Transverse colon (tissue), 4 donors: ENCODE measurements at regions of chr16 and their contacts with region 1.

Region 1: GRCh38 chr16:8674413-8675022 is at the start of gene ABAT:
- DNase-seq: peak; percentile 94
- H3K4me3 ChIP-seq: peak within 1 kb of the TSS; percentile 49 to 91 (median 60)
- H3K27ac ChIP-seq: peak within 1 kb of the TSS; percentile 51 to 67 (median 58)
- H3K4me1 ChIP-seq: peaks cover 5 to 9% (median 7%) of the 10 kb centered on the region in 4 donors
- H3K27me3 ChIP-seq: no peaks in the 10 kb centered on the region
- CTCF ChIP-seq: no peak
- EP300 ChIP-seq: no peak
- POLR2A ChIP-seq: peak; percentile 66
- total RNA-seq, gene ABAT: 15.7 to 35.2 (median 21.7) TPM

Region 2: DNA sequence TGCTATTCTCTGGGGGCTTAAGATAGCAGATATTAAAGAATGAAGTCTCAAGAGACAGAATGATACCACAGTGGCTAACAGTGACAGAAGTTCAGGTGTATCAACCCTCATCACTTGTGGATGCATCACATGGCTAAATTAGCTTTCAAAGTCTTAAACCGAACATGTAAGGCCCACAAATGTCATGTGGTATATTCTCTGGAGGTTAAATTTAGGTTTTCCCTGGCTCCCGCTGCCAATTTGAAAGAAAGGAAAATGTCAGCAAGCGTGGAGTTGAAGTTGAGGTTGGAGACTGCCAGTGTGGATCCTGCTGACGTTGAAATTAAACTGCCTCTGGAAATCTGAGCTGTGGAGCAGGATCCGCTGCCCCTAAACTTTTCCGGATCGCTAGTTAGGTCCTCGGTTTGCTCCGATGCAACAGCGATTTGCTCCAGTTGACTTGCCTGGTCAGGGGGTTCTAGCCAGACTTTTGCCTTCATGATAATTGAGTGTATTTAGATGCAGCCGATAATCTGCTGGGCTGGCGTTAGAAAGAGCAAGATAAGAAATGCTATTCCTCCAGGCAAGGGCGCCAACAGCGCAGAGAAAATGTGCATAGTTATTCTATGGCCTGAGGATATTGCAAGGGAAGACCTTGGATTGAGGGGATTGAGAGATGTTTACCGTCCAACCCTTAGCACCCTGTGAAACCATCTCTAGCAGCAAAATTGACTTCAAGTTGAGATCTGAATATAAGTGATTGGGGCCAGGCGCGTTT is 528.1 kb before region 1 on chr16:
- in situ Hi-C with region 1: no loop called
- intact Hi-C with region 1: no loop called
- DNase-seq: no peak
- H3K4me3 ChIP-seq: no peak overlapping the region
- H3K27ac ChIP-seq: no peak overlapping the region
- H3K4me1 ChIP-seq: no peaks in the 10 kb centered on the region
- H3K27me3 ChIP-seq: no peaks in the 10 kb centered on the region
- CTCF ChIP-seq: no peak
- EP300 ChIP-seq: no peak
- POLR2A ChIP-seq: no peak

Region 3: GRCh38 chr16:8493972-8494371 is 180.5 kb before region 1 on chr16:
- in situ Hi-C with region 1: no loop called
- intact Hi-C with region 1: no loop called
- DNase-seq: no peak
- H3K4me3 ChIP-seq: no peak overlapping the region
- H3K27ac ChIP-seq: no peak overlapping the region
- H3K4me1 ChIP-seq: peaks cover 0 to 14% (median 2%) of the 10 kb centered on the region in 4 donors
- H3K27me3 ChIP-seq: no peaks in the 10 kb centered on the region
- CTCF ChIP-seq: peak in 1 of 5 experiments; percentile 12
- EP300 ChIP-seq: no peak
- POLR2A ChIP-seq: no peak

Region 4: DNA sequence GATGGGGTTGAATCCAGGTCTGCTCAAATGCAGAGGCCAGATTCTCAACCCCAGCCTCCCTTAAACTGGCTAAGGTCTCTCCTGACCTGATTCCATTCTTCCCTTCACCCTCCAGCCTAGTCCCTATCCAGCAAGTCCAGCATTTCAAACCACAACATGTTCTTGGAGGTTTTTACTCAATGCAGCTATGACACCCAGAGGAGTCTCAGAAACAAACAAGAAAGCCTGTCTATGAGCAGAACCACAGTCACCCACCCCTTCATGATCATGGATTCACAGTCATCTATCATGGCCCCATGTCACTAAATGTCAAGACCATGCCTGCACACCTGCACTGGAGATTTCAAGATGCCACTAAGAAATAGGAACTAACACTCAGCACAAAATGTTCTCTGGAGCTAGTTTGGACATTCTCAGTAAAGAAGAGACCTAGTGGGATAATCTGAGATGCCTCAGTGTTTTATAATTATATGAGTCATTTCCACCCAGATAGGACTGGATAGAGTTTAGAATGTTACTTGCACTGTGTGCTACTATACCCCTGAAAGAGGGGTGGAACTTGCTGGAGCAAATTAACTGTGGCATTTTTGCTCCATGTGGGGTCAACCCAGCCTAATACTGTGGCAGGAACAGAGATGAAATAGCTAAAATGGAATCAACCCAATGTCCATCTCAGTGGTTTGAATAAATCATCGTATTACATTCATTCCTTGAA is 62.5 kb before region 1 on chr16:
- in situ Hi-C with region 1: no loop called
- intact Hi-C with region 1: no loop called
- DNase-seq: no peak
- H3K4me3 ChIP-seq: no peak overlapping the region
- H3K27ac ChIP-seq: no peak overlapping the region
- H3K4me1 ChIP-seq: no peaks in the 10 kb centered on the region
- H3K27me3 ChIP-seq: no peaks in the 10 kb centered on the region
- CTCF ChIP-seq: no peak
- EP300 ChIP-seq: no peak
- POLR2A ChIP-seq: no peak

Region 5: DNA sequence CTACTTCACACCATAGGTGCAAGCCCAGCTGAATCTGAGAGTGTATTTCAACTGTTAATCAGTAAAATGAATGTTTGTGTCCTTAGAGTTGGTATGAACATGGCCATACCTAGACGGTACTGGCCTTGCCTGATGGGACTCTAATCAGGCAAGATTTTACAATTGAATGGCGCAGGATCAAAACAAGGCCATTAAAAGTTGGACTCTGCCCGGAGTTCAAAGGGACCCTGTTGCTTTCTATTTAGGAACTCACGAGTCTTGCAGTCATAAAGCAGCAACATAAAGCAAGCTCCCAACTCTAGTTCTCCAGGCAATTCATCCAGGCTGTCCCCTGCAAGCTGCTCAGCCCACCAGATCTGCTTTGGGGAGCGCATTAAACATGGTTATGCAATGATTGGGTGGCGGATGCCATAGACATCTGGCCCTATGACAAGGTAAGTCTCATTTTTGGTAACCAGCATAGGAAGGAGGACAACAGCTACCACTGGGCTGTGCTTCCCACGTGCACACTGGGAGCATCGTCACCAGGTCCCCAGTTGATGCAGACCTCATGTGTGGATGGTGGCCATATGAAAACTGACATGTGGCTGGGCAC is 114.2 kb after region 1 on chr16:
- in situ Hi-C with region 1: loop called in 3 of 4 experiments (anchors 5 to 10 kb)
- intact Hi-C with region 1: no loop called
- DNase-seq: peak; percentile 74
- H3K4me3 ChIP-seq: no peak overlapping the region
- H3K27ac ChIP-seq: peak overlapping the region; percentile 7 to 33 (median 23)
- H3K4me1 ChIP-seq: peaks cover 0 to 11% (median 4%) of the 10 kb centered on the region in 4 donors
- H3K27me3 ChIP-seq: no peaks in the 10 kb centered on the region
- CTCF ChIP-seq: no peak
- EP300 ChIP-seq: no peak
- POLR2A ChIP-seq: no peak

Region 6: DNA sequence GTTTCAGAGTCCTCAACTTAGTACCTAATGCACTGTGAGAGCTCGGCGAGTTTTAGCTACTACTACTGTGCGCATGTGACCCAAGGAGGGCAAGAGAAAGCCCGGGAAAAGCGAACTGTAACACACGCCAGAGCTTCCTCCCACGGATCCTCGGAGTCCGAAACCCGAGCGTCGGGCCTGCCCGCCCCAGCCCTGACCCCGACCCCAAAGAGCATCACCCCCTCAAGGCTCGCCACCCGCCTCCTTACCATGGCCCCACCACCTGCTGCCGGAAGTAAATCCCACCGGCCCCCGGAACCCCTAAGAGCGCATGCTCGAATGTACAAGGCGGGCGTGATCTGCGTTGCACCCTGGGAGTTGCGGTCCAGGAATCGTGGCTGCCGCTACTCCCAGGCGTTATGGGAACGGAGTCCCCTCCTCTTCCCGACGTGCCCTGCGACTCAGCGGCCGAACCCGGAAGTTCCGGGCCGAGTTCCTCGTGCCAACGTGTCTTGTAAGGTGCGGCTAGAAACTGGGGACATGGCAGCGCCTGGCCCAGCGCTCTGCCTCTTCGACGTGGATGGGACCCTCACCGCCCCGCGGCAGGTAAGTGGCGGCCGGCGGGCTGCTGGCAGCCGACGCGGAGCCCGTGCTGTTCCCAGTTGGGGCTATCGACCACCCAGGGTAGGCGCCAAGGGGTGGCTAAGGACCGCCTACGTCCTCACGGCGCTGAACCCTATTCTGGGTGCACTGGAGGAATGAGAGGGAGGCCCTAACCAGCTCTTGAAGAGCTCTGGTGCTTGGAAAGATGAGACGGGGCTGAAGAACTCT is 123.1 kb after region 1 on chr16 and contains the starts of genes PMM2 and TMEM186:
- in situ Hi-C with region 1: loop called in 2 of 4 experiments (anchors 5 to 10 kb)
- intact Hi-C with region 1: no loop called
- DNase-seq: peak; percentile 97
- H3K4me3 ChIP-seq: peak within 1 kb of the TSS; percentile 72 to 91 (median 84)
- H3K27ac ChIP-seq: peak within 1 kb of the TSS; percentile 86 to 92 (median 90)
- H3K4me1 ChIP-seq: peaks cover 21 to 47% (median 42%) of the 10 kb centered on the region in 4 donors
- H3K27me3 ChIP-seq: no peaks in the 10 kb centered on the region
- CTCF ChIP-seq: peak in 2 of 5 experiments; percentile 14 to 16
- EP300 ChIP-seq: no peak
- POLR2A ChIP-seq: peak; percentile 72
- total RNA-seq, gene PMM2: 26.2 to 114 (median 58.5) TPM
- total RNA-seq, gene TMEM186: 1.8 to 10.3 (median 9.7) TPM in 3 of 4 donors, not detected in the other

Region 7: DNA sequence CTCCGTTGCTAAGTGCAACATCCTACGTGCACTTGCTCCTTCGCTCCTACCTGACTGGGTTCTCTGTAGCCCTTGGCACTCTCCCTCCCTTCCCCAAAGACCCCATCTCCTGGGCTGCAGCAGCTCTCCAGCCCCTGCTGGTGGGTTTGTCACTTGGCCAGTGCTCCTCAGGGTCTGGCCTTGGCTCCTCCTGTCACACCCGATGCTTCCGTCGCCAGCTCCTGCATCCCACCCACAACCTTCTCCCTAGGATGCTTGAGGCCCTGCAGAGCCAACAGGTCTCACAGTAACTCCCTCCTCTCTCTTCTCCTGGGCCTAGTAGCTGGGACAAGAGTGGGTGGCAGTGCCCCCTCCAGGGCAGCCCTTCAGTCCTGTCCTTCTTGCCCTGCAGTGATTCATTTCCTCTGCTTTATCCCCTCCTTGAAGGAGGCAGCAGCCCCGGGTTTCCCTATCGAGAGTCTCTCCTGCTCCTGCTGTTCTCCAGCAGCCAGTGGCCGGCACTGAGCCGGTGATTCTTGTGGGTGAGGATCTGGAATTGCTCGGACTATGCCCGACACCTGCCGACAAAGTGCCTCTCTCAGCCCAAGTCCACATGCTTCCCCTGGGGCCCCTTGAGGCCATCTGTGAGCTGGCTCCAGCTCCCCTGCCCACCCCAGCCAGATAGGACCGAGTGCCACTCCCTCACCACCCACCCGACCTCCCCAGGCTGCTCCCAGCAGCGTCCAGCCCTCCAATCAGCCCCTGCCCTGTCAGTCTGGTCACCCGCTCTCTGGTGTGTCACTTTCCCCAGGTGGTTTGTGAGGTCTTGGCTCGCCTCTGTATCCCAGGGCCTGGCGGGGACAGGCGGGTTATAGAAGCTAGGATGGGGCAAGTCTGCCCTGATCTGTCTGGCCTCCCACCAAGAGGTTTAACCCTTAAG is 211.4 kb after region 1 on chr16:
- in situ Hi-C with region 1: loop called in 3 of 4 experiments (anchors 10 to 25 kb)
- intact Hi-C with region 1: loop called (anchors 5 kb)
- DNase-seq: peak; percentile 50
- H3K4me3 ChIP-seq: no peak overlapping the region
- H3K27ac ChIP-seq: no peak overlapping the region
- H3K4me1 ChIP-seq: peaks cover 11 to 31% (median 29%) of the 10 kb centered on the region in 4 donors
- H3K27me3 ChIP-seq: no peaks in the 10 kb centered on the region
- CTCF ChIP-seq: no peak
- EP300 ChIP-seq: no peak
- POLR2A ChIP-seq: no peak

Region 8: GRCh38 chr16:9008601-9009260 is 334.2 kb after region 1 on chr16:
- in situ Hi-C with region 1: loop called in 2 of 4 experiments (anchors 25 kb)
- intact Hi-C with region 1: no loop called
- DNase-seq: peak; percentile 86
- H3K4me3 ChIP-seq: peak overlapping the region; percentile 4 to 47 (median 20)
- H3K27ac ChIP-seq: peak overlapping the region in 3 of 4 donors; percentile 12 to 56 (median 14)
- H3K4me1 ChIP-seq: peaks cover 8 to 25% (median 17%) of the 10 kb centered on the region in 4 donors
- H3K27me3 ChIP-seq: no peaks in the 10 kb centered on the region
- CTCF ChIP-seq: peak; percentile 85 to 89 (median 87)
- EP300 ChIP-seq: no peak
- POLR2A ChIP-seq: no peak

Region 9: GRCh38 chr16:9134739-9135138 is 460.2 kb after region 1 on chr16:
- in situ Hi-C with region 1: loop called in 2 of 4 experiments (anchors 25 kb)
- intact Hi-C with region 1: no loop called
- DNase-seq: peak; percentile 63
- H3K4me3 ChIP-seq: no peak overlapping the region
- H3K27ac ChIP-seq: no peak overlapping the region
- H3K4me1 ChIP-seq: peaks cover 0 to 9% (median 6%) of the 10 kb centered on the region in 4 donors
- H3K27me3 ChIP-seq: no peaks in the 10 kb centered on the region
- CTCF ChIP-seq: peak; percentile 39 to 60 (median 51)
- EP300 ChIP-seq: no peak
- POLR2A ChIP-seq: no peak